IMR-90 (cell line): ENCODE measurements at regions of chr15 and their contacts with region 1.

Region 1: DNA sequence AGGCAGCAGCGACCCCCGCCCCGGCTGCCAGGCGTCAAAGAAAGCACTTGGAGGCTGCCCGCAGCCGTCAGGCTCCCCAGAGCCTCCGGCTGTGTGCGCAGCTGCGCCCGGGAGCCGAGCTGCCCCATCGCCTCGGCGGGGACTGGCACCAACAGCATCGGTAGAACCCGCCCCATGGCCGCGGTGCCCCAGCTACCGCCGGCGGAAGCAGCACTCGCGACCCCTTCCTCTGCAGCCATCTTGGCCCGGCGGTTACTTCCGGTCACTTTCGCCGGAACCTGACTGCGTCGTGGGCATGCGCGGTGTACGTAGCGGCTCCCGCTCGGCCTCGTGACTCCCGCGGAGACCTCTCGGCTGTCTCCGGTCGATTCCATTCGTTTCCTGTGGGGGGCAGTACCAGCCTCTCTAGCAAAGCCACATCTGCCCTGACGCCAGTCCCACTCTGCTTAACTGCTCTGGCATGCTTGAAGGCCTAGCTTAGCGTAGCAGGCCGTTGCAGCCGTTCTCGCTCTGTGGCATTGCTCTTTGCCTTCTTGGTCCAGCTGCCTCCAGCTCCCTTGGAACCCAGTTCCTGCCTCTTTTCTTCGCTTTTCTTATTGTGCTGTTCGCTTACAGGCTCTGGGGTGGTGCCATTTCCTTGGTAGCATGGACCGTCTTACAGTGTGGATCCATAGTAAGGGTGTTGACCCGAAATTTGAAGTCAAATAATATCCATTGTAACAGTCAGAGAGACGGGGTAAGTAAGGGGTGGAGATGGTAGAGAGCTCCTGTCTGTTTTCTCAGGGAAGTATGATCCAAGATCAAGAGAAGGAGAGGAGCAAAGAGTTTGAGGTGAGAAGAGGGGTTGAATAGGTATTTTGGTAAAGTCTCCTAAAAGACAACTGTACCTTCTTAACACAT is at the start of gene SPG11:
- DNase-seq: peak; percentile 97
- ATAC-seq: peak; percentile 97
- H3K4me3 ChIP-seq: peak within 1 kb of the TSS; percentile 60
- H3K27ac ChIP-seq: peak within 1 kb of the TSS; percentile 73
- H3K4me1 ChIP-seq: 0 out of 2 replicates have a peak, but pooled peaks cover 3% of the 10 kb centered on the region
- H3K27me3 ChIP-seq: peaks cover 5% of the 10 kb centered on the region
- CTCF ChIP-seq: peak; percentile 98
- POLR2A ChIP-seq: peak; percentile 83
- RAD21 ChIP-seq: peak; percentile 93
- total RNA-seq, gene SPG11: 32.6 and 33.1 TPM in 2 replicates

Region 2: DNA sequence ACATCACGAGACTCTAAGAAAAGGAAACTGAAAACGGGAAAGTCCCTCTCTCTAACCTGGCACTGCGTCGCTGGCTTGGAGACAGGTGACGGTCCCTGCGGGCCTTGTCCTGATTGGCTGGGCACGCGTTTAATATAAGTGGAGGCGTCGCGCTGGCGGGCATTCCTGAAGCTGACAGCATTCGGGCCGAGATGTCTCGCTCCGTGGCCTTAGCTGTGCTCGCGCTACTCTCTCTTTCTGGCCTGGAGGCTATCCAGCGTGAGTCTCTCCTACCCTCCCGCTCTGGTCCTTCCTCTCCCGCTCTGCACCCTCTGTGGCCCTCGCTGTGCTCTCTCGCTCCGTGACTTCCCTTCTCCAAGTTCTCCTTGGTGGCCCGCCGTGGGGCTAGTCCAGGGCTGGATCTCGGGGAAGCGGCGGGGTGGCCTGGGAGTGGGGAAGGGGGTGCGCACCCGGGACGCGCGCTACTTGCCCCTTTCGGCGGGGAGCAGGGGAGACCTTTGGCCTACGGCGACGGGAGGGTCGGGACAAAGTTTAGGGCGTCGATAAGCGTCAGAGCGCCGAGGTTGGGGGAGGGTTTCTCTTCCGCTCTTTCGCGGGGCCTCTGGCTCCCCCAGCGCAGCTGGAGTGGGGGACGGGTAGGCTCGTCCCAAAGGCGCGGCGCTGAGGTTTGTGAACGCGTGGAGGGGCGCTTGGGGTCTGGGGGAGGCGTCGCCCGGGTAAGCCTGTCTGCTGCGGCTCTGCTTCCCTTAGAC is 47.9 kb after region 1 on chr15 and contains the start of gene B2M:
- CTCF ChIA-PET with region 1: interaction called, 6 read pairs
- POLR2A ChIA-PET with region 1: no interaction called
- dilution Hi-C with region 1: no loop called
- in situ Hi-C with region 1: no loop called
- intact Hi-C with region 1: loop called (anchors 1 kb)
- DNase-seq: peak; percentile 96
- ATAC-seq: peak; percentile 95
- H3K4me3 ChIP-seq: peak within 1 kb of the TSS; percentile 83
- H3K27ac ChIP-seq: peak within 1 kb of the TSS; percentile 87
- H3K4me1 ChIP-seq: 0 out of 2 replicates have a peak, but pooled peaks cover 2% of the 10 kb centered on the region
- H3K27me3 ChIP-seq: no peaks in the 10 kb centered on the region
- CTCF ChIP-seq: no peak
- POLR2A ChIP-seq: peak; percentile 100
- RAD21 ChIP-seq: no peak
- total RNA-seq, gene B2M: 716 and 895 TPM in 2 replicates

Region 3: GRCh38 chr15:44728576-44729407 is 65.1 kb after region 1 on chr15:
- CTCF ChIA-PET with region 1: interaction called, 3 read pairs
- POLR2A ChIA-PET with region 1: no interaction called
- dilution Hi-C with region 1: no loop called
- in situ Hi-C with region 1: no loop called
- intact Hi-C with region 1: loop called (anchors 1 kb)
- DNase-seq: peak; percentile 99
- ATAC-seq: peak; percentile 93
- H3K4me3 ChIP-seq: peak overlapping the region; percentile 56
- H3K27ac ChIP-seq: peak overlapping the region; percentile 83
- H3K4me1 ChIP-seq: peaks cover 2% of the 10 kb centered on the region; the same call in 1 of the 2 replicates
- H3K27me3 ChIP-seq: no peaks in the 10 kb centered on the region
- CTCF ChIP-seq: no peak
- POLR2A ChIP-seq: peak; percentile 58
- RAD21 ChIP-seq: no peak

Region 4: GRCh38 chr15:45037936-45038335 is 374.3 kb after region 1 on chr15:
- CTCF ChIA-PET with region 1: no interaction called
- POLR2A ChIA-PET with region 1: no interaction called
- dilution Hi-C with region 1: no loop called
- in situ Hi-C with region 1: no loop called
- intact Hi-C with region 1: loop called (anchors 5 kb)
- DNase-seq: no peak
- ATAC-seq: no peak
- H3K4me3 ChIP-seq: no peak overlapping the region
- H3K27ac ChIP-seq: no peak overlapping the region
- H3K4me1 ChIP-seq: no peaks in the 10 kb centered on the region
- H3K27me3 ChIP-seq: no peaks in the 10 kb centered on the region
- CTCF ChIP-seq: no peak
- POLR2A ChIP-seq: no peak
- RAD21 ChIP-seq: no peak